ENCODE measurements at regions of chr1 and their contacts with region 1.

Region 1: GRCh38 chr1:167517535-167518330 is 596 bp downstream of the CD247 start:
- DNase-seq: peak; percentile 98
- ATAC-seq: peak; percentile 87
- H3K4me3 Mint-ChIP-seq: peak overlapping the region; percentile 100
- H3K27ac Mint-ChIP-seq: peak overlapping the region; percentile 100
- H3K4me1 Mint-ChIP-seq: peaks cover 24% of the 10 kb centered on the region
- H3K27me3 Mint-ChIP-seq: no peaks in the 10 kb centered on the region
- CTCF ChIP-seq: no peak

Region 2: GRCh38 chr1:167220537-167221125 is 297.1 kb before region 1 on chr1 and contains the start of gene POU2F1:
- CTCF ChIA-PET with region 1: interaction called, 3 read pairs
- POLR2A ChIA-PET with region 1: interaction called, 3 read pairs
- intact Hi-C with region 1: loop called (anchors 10 kb)
- DNase-seq: peak; percentile 99
- ATAC-seq: peak; percentile 81
- H3K4me3 Mint-ChIP-seq: peak within 1 kb of the TSS; percentile 92
- H3K27ac Mint-ChIP-seq: peak within 1 kb of the TSS; percentile 99
- H3K4me1 Mint-ChIP-seq: peaks cover 43% of the 10 kb centered on the region
- H3K27me3 Mint-ChIP-seq: no peaks in the 10 kb centered on the region
- CTCF ChIP-seq: peak; percentile 11
- total RNA-seq, gene POU2F1: 23.6 to 24.2 TPM

Region 3: GRCh38 chr1:167442124-167442848 is 75.4 kb before region 1 on chr1:
- CTCF ChIA-PET with region 1: interaction called, 69 read pairs
- POLR2A ChIA-PET with region 1: interaction called, 50 read pairs
- intact Hi-C with region 1: no loop called
- DNase-seq: peak; percentile 93
- ATAC-seq: peak; percentile 73
- H3K4me3 Mint-ChIP-seq: no peak overlapping the region
- H3K27ac Mint-ChIP-seq: peak overlapping the region; percentile 68
- H3K4me1 Mint-ChIP-seq: peaks cover 88% of the 10 kb centered on the region
- H3K27me3 Mint-ChIP-seq: no peaks in the 10 kb centered on the region
- CTCF ChIP-seq: peak; percentile 88

Region 4: GRCh38 chr1:167454894-167455785 is 62.6 kb before region 1 on chr1:
- CTCF ChIA-PET with region 1: interaction called, 33 read pairs
- POLR2A ChIA-PET with region 1: interaction called, 83 read pairs
- intact Hi-C with region 1: loop called (anchors 5 kb)
- DNase-seq: peak; percentile 90
- ATAC-seq: peak; percentile 54
- H3K4me3 Mint-ChIP-seq: peak overlapping the region; percentile 76
- H3K27ac Mint-ChIP-seq: peak overlapping the region; percentile 84
- H3K4me1 Mint-ChIP-seq: peaks cover 71% of the 10 kb centered on the region
- H3K27me3 Mint-ChIP-seq: no peaks in the 10 kb centered on the region
- CTCF ChIP-seq: no peak

Region 5: GRCh38 chr1:167474191-167474716 is 43.5 kb before region 1 on chr1:
- CTCF ChIA-PET with region 1: interaction called, 7 read pairs
- POLR2A ChIA-PET with region 1: interaction called, 51 read pairs
- intact Hi-C with region 1: no loop called
- DNase-seq: peak; percentile 72
- ATAC-seq: peak; percentile 58
- H3K4me3 Mint-ChIP-seq: peak overlapping the region; percentile 59
- H3K27ac Mint-ChIP-seq: peak overlapping the region; percentile 86
- H3K4me1 Mint-ChIP-seq: peaks cover 88% of the 10 kb centered on the region
- H3K27me3 Mint-ChIP-seq: no peaks in the 10 kb centered on the region
- CTCF ChIP-seq: no peak

Region 6: DNA sequence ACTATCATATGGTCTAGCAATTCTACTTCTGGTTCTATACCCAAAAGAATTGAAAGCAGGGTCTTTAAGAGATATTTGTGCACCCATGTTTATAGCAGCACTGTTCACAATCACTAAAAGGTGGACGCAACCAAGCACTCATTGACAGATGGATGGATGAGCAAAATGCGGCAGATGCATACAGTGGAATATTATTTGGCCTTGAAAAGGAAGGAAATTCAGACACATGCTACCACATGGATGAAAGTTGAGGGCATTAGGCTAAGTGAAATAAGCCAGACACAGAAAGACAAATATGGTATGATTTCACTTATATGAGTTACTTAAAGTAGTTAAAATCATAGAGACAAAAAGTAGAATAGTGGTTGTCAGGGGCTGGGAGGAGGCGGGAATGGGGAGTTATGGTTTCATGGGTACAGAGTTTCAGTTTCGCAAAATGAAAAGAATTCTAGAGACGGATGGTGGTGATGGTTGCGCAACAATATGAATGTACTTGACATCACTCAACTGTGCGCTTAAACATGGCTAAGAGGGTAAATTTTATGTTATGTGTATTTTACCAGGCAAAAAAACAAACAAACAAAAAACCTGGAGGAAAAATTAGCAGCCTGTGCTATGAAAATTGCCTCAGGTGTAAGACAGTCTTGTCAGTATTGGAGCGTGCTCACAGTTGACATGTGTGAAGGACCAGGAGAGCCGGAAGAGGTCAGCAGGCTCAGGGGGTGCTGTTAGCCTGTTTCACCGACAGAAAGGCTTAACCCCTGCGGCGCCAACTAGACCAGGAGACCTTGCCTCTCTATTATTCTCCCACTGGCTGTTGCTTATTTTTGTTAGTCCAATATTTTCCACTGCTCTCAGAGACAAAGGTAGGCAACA is 25.9 kb before region 1 on chr1:
- CTCF ChIA-PET with region 1: interaction called, 18 read pairs
- POLR2A ChIA-PET with region 1: interaction called, 148 read pairs
- intact Hi-C with region 1: no loop called
- DNase-seq: peak; percentile 74
- ATAC-seq: peak; percentile 46
- H3K4me3 Mint-ChIP-seq: peak overlapping the region; percentile 67
- H3K27ac Mint-ChIP-seq: peak overlapping the region; percentile 96
- H3K4me1 Mint-ChIP-seq: peaks cover 91% of the 10 kb centered on the region
- H3K27me3 Mint-ChIP-seq: no peaks in the 10 kb centered on the region
- CTCF ChIP-seq: no peak

Region 7: GRCh38 chr1:167533851-167534300 is 16.1 kb after region 1 on chr1:
- CTCF ChIA-PET with region 1: interaction called, 70 read pairs
- POLR2A ChIA-PET with region 1: interaction called, 8 read pairs
- intact Hi-C with region 1: no loop called
- DNase-seq: peak; percentile 74
- ATAC-seq: peak; percentile 94
- H3K4me3 Mint-ChIP-seq: no peak overlapping the region
- H3K27ac Mint-ChIP-seq: no peak overlapping the region
- H3K4me1 Mint-ChIP-seq: peaks cover 4% of the 10 kb centered on the region
- H3K27me3 Mint-ChIP-seq: no peaks in the 10 kb centered on the region
- CTCF ChIP-seq: peak; percentile 99

Region 8: GRCh38 chr1:167599957-167600581 is 82.3 kb after region 1 on chr1:
- CTCF ChIA-PET with region 1: no interaction called
- POLR2A ChIA-PET with region 1: no interaction called
- intact Hi-C with region 1: no loop called
- DNase-seq: peak; percentile 66
- ATAC-seq: peak; percentile 77
- H3K4me3 Mint-ChIP-seq: peak overlapping the region; percentile 54
- H3K27ac Mint-ChIP-seq: peak overlapping the region; percentile 77
- H3K4me1 Mint-ChIP-seq: peaks cover 41% of the 10 kb centered on the region
- H3K27me3 Mint-ChIP-seq: no peaks in the 10 kb centered on the region
- CTCF ChIP-seq: peak; percentile 62

Region 9: DNA sequence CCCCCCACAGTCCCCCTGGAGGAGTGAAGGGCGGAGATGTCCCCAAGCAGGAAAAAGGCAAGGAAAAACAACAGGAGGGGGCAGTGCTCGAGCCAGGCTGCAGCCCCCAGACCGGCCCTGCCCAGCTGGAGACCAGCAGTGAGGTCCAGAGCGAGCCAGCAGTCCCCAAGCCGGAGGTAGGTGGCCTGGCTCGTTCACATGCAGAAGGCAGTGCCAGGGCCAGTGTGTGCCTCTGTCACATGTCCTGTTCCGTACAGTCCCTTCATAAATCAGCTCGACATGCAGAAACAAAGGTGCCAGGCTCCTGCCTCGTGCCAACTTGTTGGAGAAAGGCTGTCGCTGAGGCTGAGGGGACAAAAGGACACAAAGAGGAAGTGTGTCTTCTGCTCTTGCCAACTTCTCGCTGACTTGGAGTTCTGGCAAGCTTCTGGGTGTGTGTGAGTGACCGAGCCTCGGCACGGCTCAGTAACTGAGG is 180.0 kb after region 1 on chr1:
- CTCF ChIA-PET with region 1: no interaction called
- POLR2A ChIA-PET with region 1: no interaction called
- intact Hi-C with region 1: no loop called
- DNase-seq: no peak
- ATAC-seq: no peak
- H3K4me3 Mint-ChIP-seq: no peak overlapping the region
- H3K27ac Mint-ChIP-seq: no peak overlapping the region
- H3K4me1 Mint-ChIP-seq: no peaks in the 10 kb centered on the region
- H3K27me3 Mint-ChIP-seq: no peaks in the 10 kb centered on the region
- CTCF ChIP-seq: no peak